AG04449 (cell line): ENCODE measurements at regions of chr5 and their contacts with region 1.

Region 1: GRCh38 chr5:80093796-80094195 is 58.6 kb downstream of the THBS4 start:
- DNase-seq: no peak
- H3K4me3 ChIP-seq: no peak overlapping the region
- CTCF ChIP-seq: no peak

Region 2: GRCh38 chr5:80255732-80256479 is 162.1 kb after region 1 on chr5 and contains the start of gene SERINC5:
- CTCF ChIA-PET with region 1: interaction called, 35 read pairs
- POLR2A ChIA-PET with region 1: no interaction called
- DNase-seq: no peak
- H3K4me3 ChIP-seq: peak within 1 kb of the TSS; percentile 82
- CTCF ChIP-seq: no peak

Region 3: DNA sequence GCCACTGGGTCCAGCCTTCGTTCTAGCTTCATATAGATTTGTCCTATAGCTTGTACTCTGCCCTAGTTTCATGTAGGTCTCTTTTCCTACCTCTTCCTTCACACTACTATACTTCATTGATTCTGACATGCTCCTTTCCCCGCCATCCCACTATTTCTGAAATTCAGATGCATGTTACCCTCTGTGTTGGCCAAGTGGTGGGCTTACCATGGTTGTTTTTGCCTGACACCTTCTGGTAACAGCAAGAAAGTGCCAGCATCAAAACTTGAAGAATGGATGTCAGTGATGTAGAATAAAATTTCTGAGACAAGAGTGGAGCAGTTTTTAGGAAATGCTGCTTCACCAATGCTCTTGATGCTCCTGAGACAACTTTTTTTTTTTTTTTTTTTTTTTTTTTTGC is 181.6 kb after region 1 on chr5:
- CTCF ChIA-PET with region 1: interaction called, 60 read pairs
- POLR2A ChIA-PET with region 1: no interaction called
- DNase-seq: no peak
- H3K4me3 ChIP-seq: no peak overlapping the region
- CTCF ChIP-seq: peak; percentile 50

Region 4: GRCh38 chr5:80308526-80308925 is 214.7 kb after region 1 on chr5:
- CTCF ChIA-PET with region 1: interaction called, 309 read pairs
- POLR2A ChIA-PET with region 1: interaction called, 4 read pairs
- DNase-seq: no peak
- H3K4me3 ChIP-seq: no peak overlapping the region
- CTCF ChIP-seq: no peak

Region 5: GRCh38 chr5:80318212-80318611 is 224.4 kb after region 1 on chr5:
- CTCF ChIA-PET with region 1: interaction called, 12 read pairs
- POLR2A ChIA-PET with region 1: no interaction called
- DNase-seq: peak; percentile 26
- H3K4me3 ChIP-seq: no peak overlapping the region
- CTCF ChIP-seq: no peak